ENCODE measurements at regions of chr7 and their contacts with region 1.

Region 1: GRCh38 chr7:91876391-91877132 is 3.9 kb downstream of the MTERF1 start:
- DNase-seq: no peak
- ATAC-seq: no peak
- H3K4me3 ChIP-seq: no peak overlapping the region
- H3K4me1 ChIP-seq: peaks cover 8% of the 10 kb centered on the region
- CTCF ChIP-seq: no peak

Region 2: GRCh38 chr7:92025260-92025659 is 148.7 kb after region 1 on chr7:
- intact Hi-C with region 1: loop called in 1 of 2 experiments (anchors 10 kb)
- DNase-seq: no peak
- ATAC-seq: no peak
- H3K4me3 ChIP-seq: no peak overlapping the region
- H3K4me1 ChIP-seq: no peaks in the 10 kb centered on the region
- CTCF ChIP-seq: no peak

Measured in mucosa of descending colon (tissue), 3 donors.